ENCODE measurements at regions of chr6 and their contacts with region 1.

Region 1: GRCh38 chr6:166999145-166999883 is at the start of gene CEP43:
- DNase-seq: peak; percentile 91
- ATAC-seq: peak; percentile 96
- H3K4me3 ChIP-seq: peak within 1 kb of the TSS; percentile 93
- H3K27ac ChIP-seq: no peak within 1 kb of the TSS
- H3K4me1 ChIP-seq: peaks cover 7% of the 10 kb centered on the region; the same call in 1 of the 2 replicates
- H3K27me3 ChIP-seq: no peaks in the 10 kb centered on the region
- CTCF ChIP-seq: no peak
- total RNA-seq, gene CEP43: 11.8 and 15.2 TPM in 2 replicates

Region 2: GRCh38 chr6:166929542-166930189 is 69.6 kb before region 1 on chr6:
- CTCF ChIA-PET with region 1: no interaction called
- POLR2A ChIA-PET with region 1: no interaction called
- intact Hi-C with region 1: loop called (anchors 5 kb)
- DNase-seq: peak; percentile 14
- ATAC-seq: peak; percentile 37
- H3K4me3 ChIP-seq: no peak overlapping the region
- H3K27ac ChIP-seq: no peak overlapping the region
- H3K4me1 ChIP-seq: peaks cover 23% of the 10 kb centered on the region
- H3K27me3 ChIP-seq: no peaks in the 10 kb centered on the region
- CTCF ChIP-seq: peak; percentile 40

Region 3: DNA sequence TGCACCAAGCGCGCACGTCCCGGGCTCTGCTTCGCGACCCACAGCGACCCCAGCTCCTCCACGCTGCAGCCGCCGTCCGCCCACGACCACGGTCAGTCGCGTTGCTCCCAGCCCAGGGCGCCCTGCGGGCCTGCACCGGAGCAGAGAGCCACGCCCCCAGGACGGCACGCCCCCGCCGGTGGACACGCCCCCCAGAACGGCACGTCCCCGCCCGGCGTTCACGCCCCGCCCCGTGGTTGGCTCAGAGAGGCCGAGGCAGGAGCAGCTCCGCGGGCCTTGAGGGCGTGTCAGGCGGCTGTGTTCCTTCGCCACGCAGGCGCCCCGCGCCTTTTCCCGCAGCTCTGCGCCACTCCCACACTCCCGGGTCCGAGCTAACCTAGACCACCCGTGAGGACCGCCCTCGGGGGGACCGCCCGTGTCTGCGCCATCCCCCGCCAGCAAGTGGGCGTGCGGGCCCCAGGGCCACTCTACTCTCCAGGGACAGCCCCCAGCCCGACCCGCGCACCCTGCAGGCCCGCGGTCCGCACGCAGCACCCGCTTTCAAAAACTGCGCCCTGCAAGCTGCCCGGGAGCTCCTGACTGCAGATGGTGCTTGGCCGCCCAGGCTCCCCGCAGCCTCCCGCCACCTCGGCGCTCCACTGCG is 42.7 kb before region 1 on chr6 and contains the start of gene RNASET2:
- CTCF ChIA-PET with region 1: no interaction called
- POLR2A ChIA-PET with region 1: no interaction called
- intact Hi-C with region 1: loop called (anchors 2 kb)
- DNase-seq: peak; percentile 83
- ATAC-seq: peak; percentile 86
- H3K4me3 ChIP-seq: peak within 1 kb of the TSS; percentile 85
- H3K27ac ChIP-seq: no peak within 1 kb of the TSS
- H3K4me1 ChIP-seq: peaks cover 7% of the 10 kb centered on the region
- H3K27me3 ChIP-seq: no peaks in the 10 kb centered on the region
- CTCF ChIP-seq: no peak
- total RNA-seq, gene RNASET2: 51.8 and 77.4 TPM in 2 replicates

Region 4: DNA sequence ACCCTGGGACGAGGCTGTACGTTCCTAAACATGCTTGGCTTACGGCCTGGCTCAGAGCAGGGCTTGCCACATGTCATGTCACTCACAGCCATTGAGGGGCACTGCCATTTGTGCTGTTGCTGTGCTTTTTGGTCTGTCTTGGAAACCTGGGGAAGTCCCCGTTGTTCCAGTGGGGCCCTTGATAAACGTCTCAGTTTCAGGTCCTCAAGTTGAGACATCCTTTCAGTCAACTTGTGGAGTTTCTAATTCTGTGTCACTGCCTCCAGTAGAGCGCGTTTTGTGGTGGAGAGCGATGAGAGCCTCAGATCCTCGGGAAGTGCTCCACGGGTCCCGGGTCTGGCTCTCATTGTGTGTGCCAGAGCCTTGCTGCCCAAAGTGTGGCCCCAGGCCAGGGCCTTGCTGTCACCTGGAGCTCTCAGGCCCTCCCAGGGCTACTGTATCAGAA is 80.6 kb after region 1 on chr6:
- CTCF ChIA-PET with region 1: no interaction called
- POLR2A ChIA-PET with region 1: no interaction called
- intact Hi-C with region 1: no loop called
- DNase-seq: no peak
- ATAC-seq: no peak
- H3K4me3 ChIP-seq: no peak overlapping the region
- H3K27ac ChIP-seq: no peak overlapping the region
- H3K4me1 ChIP-seq: no peaks in the 10 kb centered on the region
- H3K27me3 ChIP-seq: peaks cover 23% of the 10 kb centered on the region
- CTCF ChIP-seq: no peak

Region 5: DNA sequence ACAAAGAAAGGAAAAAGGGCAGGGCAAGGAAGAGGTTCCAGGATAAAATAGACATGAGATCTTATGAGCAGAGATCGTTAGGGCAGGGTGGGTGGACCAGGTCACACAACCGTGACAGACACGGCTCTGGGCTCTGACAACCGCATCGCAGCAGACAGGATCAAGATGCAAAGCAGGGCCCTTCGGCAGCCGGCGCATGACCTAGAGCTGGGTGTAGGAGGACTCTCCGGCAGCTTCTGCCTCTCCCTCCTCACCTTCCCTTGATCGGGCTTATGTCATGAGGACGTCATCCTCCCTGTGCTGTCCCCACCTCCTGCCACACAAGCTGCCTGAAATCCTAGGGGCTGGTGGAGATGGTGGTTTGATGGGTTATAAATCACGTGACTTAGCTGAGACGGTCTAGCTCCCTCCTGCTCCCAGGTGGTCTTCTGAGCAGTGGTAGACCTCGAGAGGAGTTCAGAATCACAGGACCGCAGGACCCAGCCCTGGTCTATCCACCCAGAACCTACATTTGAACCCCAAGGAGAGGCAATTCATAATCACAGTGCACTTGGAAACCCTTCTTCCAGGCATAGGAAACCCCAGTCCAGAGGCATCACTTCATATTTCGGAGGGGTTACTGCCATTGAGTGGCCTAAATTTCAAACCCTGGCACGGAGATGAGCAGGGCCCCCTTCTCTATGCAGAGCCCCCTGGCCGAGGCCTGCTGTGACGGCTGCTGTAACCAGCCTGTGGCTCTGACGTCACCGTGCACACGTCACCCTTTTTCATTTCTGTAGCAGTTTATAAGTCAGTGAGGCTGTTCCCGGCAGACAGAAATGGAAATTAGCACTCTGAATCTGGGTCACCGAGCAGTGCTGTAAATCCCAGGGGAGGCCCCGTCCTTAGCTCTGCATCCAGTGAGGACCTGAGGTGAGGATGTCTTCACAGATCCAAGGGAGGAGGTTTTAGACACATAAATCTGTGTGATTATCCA is 114.9 kb after region 1 on chr6:
- CTCF ChIA-PET with region 1: no interaction called
- POLR2A ChIA-PET with region 1: no interaction called
- intact Hi-C with region 1: no loop called
- DNase-seq: no peak
- ATAC-seq: no peak
- H3K4me3 ChIP-seq: no peak overlapping the region
- H3K27ac ChIP-seq: no peak overlapping the region
- H3K4me1 ChIP-seq: no peaks in the 10 kb centered on the region
- H3K27me3 ChIP-seq: peaks cover 46% of the 10 kb centered on the region
- CTCF ChIP-seq: no peak

Region 6: DNA sequence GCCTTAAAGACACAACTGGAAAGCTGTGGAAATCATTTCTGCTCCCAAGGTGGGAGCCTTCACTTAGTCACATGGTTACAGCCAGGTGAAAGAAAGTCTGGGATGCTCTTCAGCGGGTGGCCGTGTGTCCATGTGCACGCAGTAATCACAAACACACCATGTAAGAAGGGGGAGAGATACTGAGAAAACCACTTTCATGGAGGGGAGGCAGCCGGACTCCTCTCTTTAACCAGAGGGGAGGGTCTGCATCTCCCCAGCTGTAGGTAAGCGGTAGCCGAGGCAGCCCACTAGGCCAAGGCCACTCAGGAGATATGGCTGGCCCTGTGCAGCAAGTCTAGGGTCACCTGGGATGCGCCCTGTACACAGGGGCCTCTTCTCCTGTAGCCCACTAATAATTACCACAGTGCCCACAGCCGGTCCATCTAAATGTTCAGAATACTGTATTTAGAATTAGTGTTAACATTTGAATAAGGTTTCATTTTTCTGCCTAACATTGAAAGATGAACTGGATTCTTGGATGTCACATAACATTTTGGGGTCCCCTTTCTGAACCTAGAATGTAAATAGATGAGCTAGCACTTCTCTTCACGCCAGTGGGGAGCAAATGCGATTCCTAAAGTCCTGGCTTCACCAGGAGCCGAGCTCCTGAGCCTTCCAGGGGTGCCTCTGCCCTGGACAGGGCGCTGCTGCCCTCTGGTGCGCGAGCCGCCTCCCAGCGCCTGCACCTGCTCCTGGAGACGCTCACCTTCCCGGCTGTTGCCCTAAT is 142.5 kb after region 1 on chr6:
- CTCF ChIA-PET with region 1: no interaction called
- POLR2A ChIA-PET with region 1: no interaction called
- intact Hi-C with region 1: loop called (anchors 1 kb)
- DNase-seq: peak; percentile 41
- ATAC-seq: peak; percentile 81
- H3K4me3 ChIP-seq: no peak overlapping the region
- H3K27ac ChIP-seq: no peak overlapping the region
- H3K4me1 ChIP-seq: no peaks in the 10 kb centered on the region
- H3K27me3 ChIP-seq: peaks cover 37% of the 10 kb centered on the region
- CTCF ChIP-seq: peak; percentile 65